ENCODE measurements at regions of chr13 and their contacts with region 1.

Region 1: DNA sequence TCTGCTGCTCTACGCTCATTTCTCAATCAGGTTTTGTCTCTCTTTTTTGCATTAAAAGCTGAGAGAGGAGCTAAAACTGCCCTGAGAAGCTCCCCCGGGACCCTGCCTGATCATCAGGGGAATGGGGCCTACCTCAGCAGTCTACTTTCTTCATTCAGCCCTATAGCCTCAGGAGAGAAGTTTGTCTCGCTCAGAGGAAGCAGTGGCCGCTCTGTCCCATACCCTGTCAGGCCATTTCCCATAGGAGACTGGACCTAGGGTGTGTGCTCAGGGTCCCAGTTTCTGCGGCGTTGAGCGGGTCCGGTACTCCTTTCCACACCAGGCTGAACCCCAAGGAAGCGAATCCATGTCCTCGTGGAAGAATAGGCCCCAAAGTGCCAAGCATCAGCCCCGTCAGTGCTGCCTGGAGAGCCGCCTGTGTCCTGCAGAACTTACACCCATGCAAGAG is 21.7 kb downstream of the UBE2L5 start:
- DNase-seq: peak; percentile 97
- H3K4me3 ChIP-seq: peak overlapping the region; percentile 87
- H3K27ac ChIP-seq: peak overlapping the region; percentile 98
- H3K4me1 ChIP-seq: peaks cover 72% of the 10 kb centered on the region
- CTCF ChIP-seq: no peak; the same call in 1 of the 2 replicates

Region 2: GRCh38 chr13:30257468-30258099 is 186.4 kb before region 1 on chr13:
- CTCF ChIA-PET with region 1: no interaction called
- POLR2A ChIA-PET with region 1: no interaction called
- intact Hi-C with region 1: loop called (anchors 5 kb)
- DNase-seq: peak; percentile 54
- H3K4me3 ChIP-seq: peak overlapping the region; percentile 42
- H3K27ac ChIP-seq: peak overlapping the region; percentile 60
- H3K4me1 ChIP-seq: peaks cover 28% of the 10 kb centered on the region
- CTCF ChIP-seq: no peak

Region 3: GRCh38 chr13:30408319-30409101 is 35.5 kb before region 1 on chr13:
- CTCF ChIA-PET with region 1: interaction called, 3 read pairs
- POLR2A ChIA-PET with region 1: interaction called, 8 read pairs
- intact Hi-C with region 1: loop called (anchors 1 kb)
- DNase-seq: peak; percentile 88
- H3K4me3 ChIP-seq: no peak overlapping the region
- H3K27ac ChIP-seq: peak overlapping the region; percentile 26
- H3K4me1 ChIP-seq: peaks cover 57% of the 10 kb centered on the region
- CTCF ChIP-seq: peak; percentile 72

Region 4: GRCh38 chr13:30422054-30422839 is 21.7 kb before region 1 on chr13 and contains the start of gene UBE2L5:
- CTCF ChIA-PET with region 1: interaction called, 4 read pairs
- POLR2A ChIA-PET with region 1: interaction called, 235 read pairs
- intact Hi-C with region 1: loop called (anchors 2 kb)
- DNase-seq: peak; percentile 88
- H3K4me3 ChIP-seq: peak within 1 kb of the TSS; percentile 72
- H3K27ac ChIP-seq: peak within 1 kb of the TSS; percentile 76
- H3K4me1 ChIP-seq: peaks cover 77% of the 10 kb centered on the region
- CTCF ChIP-seq: no peak
- total RNA-seq, gene UBE2L5: 0.15 and 0.22 TPM in 2 replicates

Region 5: DNA sequence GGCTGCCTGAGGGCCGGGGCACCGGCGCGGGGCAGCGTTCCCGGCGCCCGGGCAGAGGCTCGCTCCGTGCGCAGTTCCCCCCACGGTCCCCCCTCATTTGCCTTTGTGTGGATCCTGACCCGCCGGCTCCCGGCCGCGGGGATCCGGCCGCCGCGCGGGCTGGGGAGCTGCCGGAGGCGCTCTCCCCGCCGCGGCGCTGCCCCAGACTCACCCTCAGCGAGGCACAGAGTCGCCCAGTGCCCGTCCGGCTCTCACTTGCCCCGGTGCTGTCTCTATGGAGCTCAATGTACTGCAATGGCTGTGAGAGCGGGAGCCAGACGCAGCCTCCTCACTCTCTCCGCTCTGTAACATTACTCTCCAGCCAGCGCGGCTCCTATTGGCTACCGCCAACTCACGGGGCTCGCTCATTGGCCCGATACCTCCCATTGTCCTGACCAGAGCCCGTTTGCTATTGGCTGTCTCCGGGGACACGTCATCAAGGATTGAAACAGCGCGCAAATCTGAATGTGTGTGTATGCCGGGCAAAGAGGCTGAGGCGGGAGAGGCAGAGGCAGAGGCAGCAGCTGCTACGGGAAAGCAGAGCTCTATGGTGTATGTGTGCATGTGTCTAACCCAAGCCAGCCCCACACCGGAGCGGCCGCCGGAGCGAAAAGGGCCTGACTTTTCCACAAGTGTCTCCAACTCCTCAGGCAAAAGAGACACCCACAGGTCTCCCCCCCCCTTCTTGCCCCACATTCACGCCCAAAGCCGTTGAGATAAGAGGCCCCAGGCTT is 21.8 kb after region 1 on chr13 and contains the start of gene HMGB1:
- CTCF ChIA-PET with region 1: interaction called, 3 read pairs
- POLR2A ChIA-PET with region 1: interaction called, 11 read pairs
- intact Hi-C with region 1: loop called (anchors 2 kb)
- DNase-seq: peak; percentile 100
- H3K4me3 ChIP-seq: peak within 1 kb of the TSS; percentile 99
- H3K27ac ChIP-seq: peak within 1 kb of the TSS; percentile 93
- H3K4me1 ChIP-seq: peaks cover 44% of the 10 kb centered on the region
- CTCF ChIP-seq: no peak
- total RNA-seq, gene HMGB1: 1,288 and 1,675 TPM in 2 replicates